H1 (cell line): ENCODE measurements at regions of chr1 and their contacts with region 1.

Region 1: GRCh38 chr1:150363426-150364230 is at the start of gene RPRD2:
- DNase-seq: peak; percentile 95 to 96
- H3K4me3 ChIP-seq: peak within 1 kb of the TSS; percentile 73 to 96 (median 92)
- H3K27ac ChIP-seq: peak within 1 kb of the TSS; percentile 98
- H3K4me1 ChIP-seq: peaks cover 2 to 5% (median 4%) of the 10 kb centered on the region in 4 experiments; a peak in 5 of 7 replicates
- H3K27me3 ChIP-seq: no peaks in the 10 kb centered on the region
- CTCF ChIP-seq: 0 out of 4 replicates have a peak, but pooled peaks of 1 of the 3 experiments have one; percentile 2
- EP300 ChIP-seq: no peak
- POLR2A ChIP-seq: peak; percentile 58 to 94
- RAD21 ChIP-seq: no peak
- total RNA-seq, gene RPRD2: 30.2 and 32.4 TPM in 2 replicates

Region 2: DNA sequence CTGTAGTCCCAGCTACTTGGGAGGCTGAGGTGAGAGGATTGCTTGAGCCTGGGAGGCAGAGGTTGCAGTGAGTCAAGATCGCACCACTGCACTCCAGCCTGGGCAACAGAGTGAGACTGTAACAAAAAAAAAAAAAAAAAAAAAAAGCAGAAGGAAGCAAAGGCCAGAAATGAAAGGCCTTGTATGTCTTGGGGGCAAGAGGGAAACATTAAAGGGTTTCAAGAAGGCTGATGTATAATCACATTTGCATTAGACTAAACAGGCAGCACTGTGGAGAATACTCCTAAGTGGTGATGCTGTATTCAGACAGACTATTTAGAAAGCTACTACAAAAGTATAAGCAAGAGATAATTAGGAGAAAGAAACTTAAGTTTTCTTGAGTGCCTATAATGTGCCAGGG is 138.1 kb before region 1 on chr1:
- CTCF ChIA-PET with region 1: no interaction called
- POLR2A ChIA-PET with region 1: no interaction called
- DNase-seq: no peak
- H3K4me3 ChIP-seq: no peak overlapping the region
- H3K27ac ChIP-seq: no peak overlapping the region
- H3K4me1 ChIP-seq: no peaks in the 10 kb centered on the region
- H3K27me3 ChIP-seq: no peaks in the 10 kb centered on the region
- CTCF ChIP-seq: no peak
- EP300 ChIP-seq: no peak
- POLR2A ChIP-seq: no peak
- RAD21 ChIP-seq: no peak

Region 3: GRCh38 chr1:150387200-150387599 is 23.6 kb after region 1 on chr1:
- CTCF ChIA-PET with region 1: no interaction called
- POLR2A ChIA-PET with region 1: interaction called, 14 read pairs
- DNase-seq: no peak
- H3K4me3 ChIP-seq: no peak overlapping the region
- H3K27ac ChIP-seq: no peak overlapping the region
- H3K4me1 ChIP-seq: no peaks in the 10 kb centered on the region
- H3K27me3 ChIP-seq: no peaks in the 10 kb centered on the region
- CTCF ChIP-seq: no peak
- EP300 ChIP-seq: no peak
- POLR2A ChIP-seq: no peak
- RAD21 ChIP-seq: no peak